ENCODE measurements at regions of chr10 and their contacts with region 1.

Region 1: GRCh38 chr10:60186315-60187071 is 203.2 kb downstream of the ANK3 start:
- DNase-seq: peak; percentile 34 to 60
- ATAC-seq: peak; percentile 72 to 89 (median 82)
- H3K4me3 ChIP-seq: no peak overlapping the region
- H3K27ac ChIP-seq: peak overlapping the region in 6 of 10 donors; percentile 18 to 54 (median 46)
- H3K4me1 ChIP-seq: peaks cover 0 to 58% (median 25%) of the 10 kb centered on the region in 9 donors
- H3K27me3 ChIP-seq: no peaks in the 10 kb centered on the region
- CTCF ChIP-seq: no peak

Region 2: DNA sequence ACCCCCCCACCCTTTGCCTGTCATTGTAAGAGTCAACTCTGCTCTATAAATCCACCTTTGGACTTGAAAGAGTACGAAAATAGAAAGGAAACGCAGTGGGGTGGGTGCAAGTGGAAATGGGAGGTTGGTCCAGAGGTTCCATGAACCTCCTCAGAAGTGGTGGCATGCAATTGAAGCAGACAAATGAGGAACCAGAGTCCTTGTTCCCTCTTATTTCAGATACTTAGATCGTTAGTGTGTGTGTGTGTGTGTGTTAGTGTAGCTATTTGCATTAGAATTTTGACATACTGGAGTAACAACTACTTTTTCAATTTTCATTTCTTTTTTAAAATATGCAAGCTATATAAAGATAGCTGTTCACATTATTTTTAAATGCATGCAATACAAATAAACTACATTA is 1819.4 kb before region 1 on chr10:
- intact Hi-C with region 1: loop called in 1 of 10 experiments (anchors 5 kb)
- DNase-seq: no peak
- ATAC-seq: no peak
- H3K4me3 ChIP-seq: no peak overlapping the region
- H3K27ac ChIP-seq: no peak overlapping the region
- H3K4me1 ChIP-seq: peaks cover 0 to 2% (median 0%) of the 10 kb centered on the region in 9 donors
- H3K27me3 ChIP-seq: no peaks in the 10 kb centered on the region
- CTCF ChIP-seq: no peak

Region 3: DNA sequence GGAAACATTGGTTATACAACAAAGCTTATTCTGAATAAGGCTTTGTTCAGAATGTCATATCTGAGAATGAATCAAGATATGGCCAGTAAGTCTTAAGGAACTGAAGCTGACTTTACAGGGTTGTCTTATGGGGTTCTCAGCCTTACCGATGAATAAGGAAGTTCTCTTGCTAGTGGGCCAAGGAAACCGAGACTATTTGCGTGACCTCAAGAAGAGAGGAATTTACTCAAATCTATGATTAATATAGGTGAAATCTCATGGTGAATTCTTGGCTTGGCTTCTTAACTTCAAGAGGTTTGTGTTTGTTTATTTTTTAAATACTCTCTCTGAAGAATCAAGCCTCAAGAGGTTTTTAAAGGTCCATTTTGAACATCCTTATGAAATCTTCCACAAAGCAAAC is 428.5 kb before region 1 on chr10:
- intact Hi-C with region 1: no loop called
- DNase-seq: no peak
- ATAC-seq: no peak
- H3K4me3 ChIP-seq: no peak overlapping the region
- H3K27ac ChIP-seq: no peak overlapping the region
- H3K4me1 ChIP-seq: no peaks in the 10 kb centered on the region
- H3K27me3 ChIP-seq: no peaks in the 10 kb centered on the region
- CTCF ChIP-seq: no peak

Region 4: GRCh38 chr10:59779756-59780533 is 406.5 kb before region 1 on chr10:
- intact Hi-C with region 1: no loop called
- DNase-seq: peak in 1 of 2 donors; percentile 15
- ATAC-seq: peak in 7 of 8 donors; percentile 33 to 88 (median 76)
- H3K4me3 ChIP-seq: no peak overlapping the region
- H3K27ac ChIP-seq: peak overlapping the region in 2 of 10 donors; percentile 5 to 64
- H3K4me1 ChIP-seq: peaks cover 0 to 6% (median 0%) of the 10 kb centered on the region in 9 donors
- H3K27me3 ChIP-seq: no peaks in the 10 kb centered on the region
- CTCF ChIP-seq: no peak

Region 5: GRCh38 chr10:60114765-60115586 is 71.5 kb before region 1 on chr10:
- intact Hi-C with region 1: loop called in 2 of 10 experiments (anchors 5 kb)
- DNase-seq: no peak
- ATAC-seq: peak in 4 of 8 donors; percentile 51 to 74 (median 62)
- H3K4me3 ChIP-seq: no peak overlapping the region
- H3K27ac ChIP-seq: no peak overlapping the region
- H3K4me1 ChIP-seq: peaks cover 0 to 8% (median 2%) of the 10 kb centered on the region in 9 donors
- H3K27me3 ChIP-seq: no peaks in the 10 kb centered on the region
- CTCF ChIP-seq: peak in 8 of 9 donors; percentile 4 to 65 (median 56)

Region 6: DNA sequence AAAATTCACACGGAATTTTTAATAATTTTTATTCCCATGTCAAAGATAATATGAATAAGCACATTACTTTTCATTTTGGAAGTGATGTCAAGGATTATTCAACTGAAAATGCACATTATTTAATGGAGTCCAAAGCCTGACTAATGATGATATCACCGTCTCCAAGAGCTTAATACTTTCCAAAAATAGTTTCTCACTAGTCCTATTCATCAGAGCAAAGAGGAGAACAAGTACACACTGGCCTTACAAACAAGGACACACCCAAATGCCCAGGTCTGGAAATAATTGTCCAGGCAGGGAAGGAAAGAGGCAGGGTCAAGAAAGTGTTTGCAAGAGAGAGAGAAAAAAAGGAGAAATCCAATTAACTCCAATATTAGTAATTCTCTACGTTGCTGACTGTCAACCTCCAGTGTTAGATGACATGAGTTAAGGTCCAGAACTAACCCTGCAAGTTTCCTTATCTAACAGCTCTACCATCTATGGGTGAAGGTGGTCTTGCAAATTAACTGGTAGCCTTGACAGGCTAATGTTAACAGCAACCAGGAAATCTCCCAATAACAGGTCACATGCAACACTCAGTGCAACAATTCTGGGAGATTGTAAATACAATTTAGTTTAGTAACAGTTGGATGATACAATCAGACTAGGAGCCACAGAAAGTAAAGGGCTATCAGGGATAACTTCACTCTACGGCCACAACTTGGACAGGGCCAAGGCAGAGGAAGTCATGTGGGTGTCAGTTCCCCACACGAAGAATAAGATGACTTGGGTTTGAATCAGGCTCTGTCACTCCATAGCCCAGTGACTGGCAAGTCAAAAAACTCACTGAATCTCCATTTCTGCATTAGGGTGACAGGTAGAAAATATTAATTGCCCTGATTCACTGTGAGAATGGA is 63.1 kb before region 1 on chr10:
- intact Hi-C with region 1: loop called in 1 of 10 experiments (anchors 5 kb)
- DNase-seq: no peak
- ATAC-seq: peak in 7 of 8 donors; percentile 80 to 95 (median 87)
- H3K4me3 ChIP-seq: no peak overlapping the region
- H3K27ac ChIP-seq: peak overlapping the region in 9 of 10 donors; percentile 1 to 65 (median 49)
- H3K4me1 ChIP-seq: peaks cover 3 to 22% (median 9%) of the 10 kb centered on the region in 9 donors
- H3K27me3 ChIP-seq: no peaks in the 10 kb centered on the region
- CTCF ChIP-seq: no peak

Measured in heart right ventricle (tissue), 16 donors.